ENCODE measurements at regions of chr19 and their contacts with region 1.

Region 1: GRCh38 chr19:42386974-42387707 is 3.0 kb downstream of the CNFN start:
- DNase-seq: peak; percentile 86
- ATAC-seq: peak; percentile 95
- H3K4me3 Mint-ChIP-seq: peak overlapping the region; percentile 78
- H3K27ac Mint-ChIP-seq: peak overlapping the region; percentile 63
- H3K4me1 Mint-ChIP-seq: peaks cover 7% of the 10 kb centered on the region
- H3K27me3 Mint-ChIP-seq: peaks cover 32% of the 10 kb centered on the region
- CTCF ChIP-seq: no peak

Region 2: DNA sequence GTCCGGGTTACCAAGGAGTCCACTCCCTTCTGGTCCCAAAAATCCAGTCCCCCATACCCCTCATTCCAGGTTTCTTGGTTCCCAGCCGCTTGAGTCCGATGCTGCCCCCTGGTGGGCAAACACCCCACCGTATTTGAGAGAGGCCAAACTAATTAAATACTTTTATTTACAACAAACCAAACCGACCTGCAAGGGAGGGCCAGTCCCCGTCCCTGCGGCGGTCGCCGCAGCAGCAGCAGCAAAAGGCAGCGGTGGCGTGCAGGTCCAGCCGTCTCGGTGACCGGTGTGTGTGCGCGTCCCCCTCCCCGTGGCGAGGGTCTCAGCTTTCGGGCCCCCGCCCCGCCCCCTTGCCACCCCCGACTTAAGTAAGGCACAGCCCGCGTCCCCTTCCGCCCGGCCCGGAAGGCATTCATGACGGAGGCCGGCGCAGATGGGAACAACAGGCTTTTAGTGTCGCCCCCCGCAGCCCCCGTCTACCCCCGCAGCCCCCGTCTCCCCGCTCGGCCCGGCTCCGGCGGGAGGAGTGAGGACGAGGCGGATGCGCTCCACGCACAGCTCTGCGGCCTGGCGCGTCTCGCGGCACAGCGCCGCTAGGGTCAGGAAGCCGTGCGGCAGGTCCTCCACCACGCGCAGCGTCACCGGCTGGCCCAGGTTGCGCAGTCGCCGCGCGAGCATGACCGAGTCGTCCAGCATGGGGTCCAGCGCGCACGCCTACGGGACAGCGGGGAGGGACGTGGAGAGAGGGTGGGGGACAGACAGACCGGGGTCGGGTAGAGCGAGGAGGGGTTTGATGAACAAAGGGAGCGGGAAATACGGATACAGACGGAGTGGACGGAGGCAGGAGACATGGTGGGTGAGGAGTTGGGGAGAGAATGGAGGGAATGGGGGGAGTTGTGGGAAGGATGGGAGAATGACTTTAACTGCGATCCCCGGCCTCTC is 14.5 kb after region 1 on chr19:
- CTCF ChIA-PET with region 1: interaction called, 7 read pairs
- POLR2A ChIA-PET with region 1: interaction called, 10 read pairs
- intact Hi-C with region 1: loop called (anchors 1 kb)
- DNase-seq: peak; percentile 74
- ATAC-seq: peak; percentile 49
- H3K4me3 Mint-ChIP-seq: peak overlapping the region; percentile 80
- H3K27ac Mint-ChIP-seq: peak overlapping the region; percentile 72
- H3K4me1 Mint-ChIP-seq: peaks cover 46% of the 10 kb centered on the region
- H3K27me3 Mint-ChIP-seq: no peaks in the 10 kb centered on the region
- CTCF ChIP-seq: no peak

Region 3: GRCh38 chr19:42433503-42434260 is 46.5 kb after region 1 on chr19:
- CTCF ChIA-PET with region 1: interaction called, 3 read pairs
- POLR2A ChIA-PET with region 1: no interaction called
- intact Hi-C with region 1: loop called (anchors 1 kb)
- DNase-seq: no peak
- ATAC-seq: peak; percentile 66
- H3K4me3 Mint-ChIP-seq: no peak overlapping the region
- H3K27ac Mint-ChIP-seq: no peak overlapping the region
- H3K4me1 Mint-ChIP-seq: peaks cover 4% of the 10 kb centered on the region
- H3K27me3 Mint-ChIP-seq: no peaks in the 10 kb centered on the region
- CTCF ChIP-seq: no peak